ENCODE measurements at regions of chr11 and their contacts with region 1.

Region 1: DNA sequence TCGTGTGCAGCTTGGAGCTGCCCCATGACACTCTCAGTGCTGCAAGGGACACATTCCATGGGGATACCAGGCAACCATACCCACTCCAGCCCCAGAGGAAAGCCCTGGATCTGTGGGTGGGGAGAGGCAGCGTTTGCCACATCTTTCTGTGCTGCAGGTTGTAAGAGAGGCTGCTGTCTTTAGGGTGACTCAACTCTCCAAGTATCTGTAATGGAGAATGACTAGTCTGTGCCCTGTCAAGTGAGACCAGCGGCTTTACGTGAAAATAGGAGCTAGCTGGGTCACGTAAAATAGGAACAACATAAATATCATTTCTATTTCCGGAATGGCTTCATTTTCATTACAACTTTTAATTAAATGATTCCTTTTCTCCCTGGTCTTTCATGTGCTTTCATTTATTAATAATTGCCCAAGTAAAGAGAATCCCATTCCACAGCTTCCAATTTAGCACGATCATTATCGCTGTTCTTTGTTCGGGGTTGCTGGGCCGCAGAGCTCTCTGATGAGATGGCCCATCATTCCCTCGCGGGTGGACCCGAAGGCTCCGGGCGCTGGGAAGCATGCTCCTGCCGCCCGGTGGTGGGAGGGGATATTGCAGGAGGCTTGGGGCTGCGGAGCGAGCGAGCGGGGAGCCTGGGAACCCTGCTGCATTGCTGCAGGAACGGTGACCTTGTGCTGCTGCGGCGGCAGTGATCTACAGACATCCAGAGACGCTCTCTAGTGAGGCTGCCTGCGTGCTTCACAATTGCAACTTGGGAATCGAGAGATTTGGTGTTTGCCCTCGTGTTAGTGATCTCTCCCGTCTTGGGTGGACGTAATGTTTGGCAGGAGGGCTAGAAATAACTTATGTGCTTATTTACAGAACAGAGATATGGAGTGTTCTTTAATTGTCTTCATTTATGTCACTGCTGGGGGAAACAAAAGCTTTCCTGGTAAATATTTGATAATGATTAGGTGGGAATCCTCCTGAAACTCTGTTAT is 10.6 kb downstream of the SLC6A5 start:
- DNase-seq: peak; percentile 82 to 87 (median 84)
- ATAC-seq: peak; percentile 98
- H3K4me3 ChIP-seq: no peak overlapping the region
- H3K27ac ChIP-seq: no peak overlapping the region
- H3K4me1 ChIP-seq: peaks cover 0 to 8% of the 10 kb centered on the region in 2 experiments; a peak in 2 of 5 replicates
- H3K27me3 ChIP-seq: peaks cover 9 to 21% of the 10 kb centered on the region in 2 experiments; a peak in 4 of 5 replicates
- CTCF ChIP-seq: peak; percentile 93 to 97 (median 94)
- EP300 ChIP-seq: no peak
- POLR2A ChIP-seq: no peak
- RAD21 ChIP-seq: peak; percentile 92 to 93

Region 2: GRCh38 chr11:19951558-19952115 is 658.4 kb before region 1 on chr11:
- CTCF ChIA-PET with region 1: no interaction called
- POLR2A ChIA-PET with region 1: no interaction called
- in situ Hi-C with region 1: loop called (anchors 25 kb)
- intact Hi-C with region 1: loop called (anchors 10 kb)
- DNase-seq: peak; percentile 49 to 68 (median 58)
- ATAC-seq: peak; percentile 68
- H3K4me3 ChIP-seq: no peak overlapping the region
- H3K27ac ChIP-seq: no peak overlapping the region
- H3K4me1 ChIP-seq: no peaks in the 10 kb centered on the region; a peak in 2 of 5 replicates
- H3K27me3 ChIP-seq: peaks cover 21 to 22% of the 10 kb centered on the region in 2 experiments
- CTCF ChIP-seq: peak; percentile 52 to 79 (median 56)
- EP300 ChIP-seq: no peak
- POLR2A ChIP-seq: no peak
- RAD21 ChIP-seq: peak; percentile 92 to 97

Region 3: GRCh38 chr11:20355221-20356219 is 254.5 kb before region 1 on chr11:
- CTCF ChIA-PET with region 1: no interaction called
- POLR2A ChIA-PET with region 1: no interaction called
- in situ Hi-C with region 1: no loop called
- intact Hi-C with region 1: loop called (anchors 5 kb)
- DNase-seq: peak; percentile 45 to 72 (median 58)
- ATAC-seq: peak; percentile 89
- H3K4me3 ChIP-seq: no peak overlapping the region
- H3K27ac ChIP-seq: no peak overlapping the region
- H3K4me1 ChIP-seq: peaks cover 0 to 28% of the 10 kb centered on the region in 2 experiments; a peak in 4 of 5 replicates
- H3K27me3 ChIP-seq: no peaks in the 10 kb centered on the region
- CTCF ChIP-seq: peak; percentile 59 to 70 (median 64)
- EP300 ChIP-seq: no peak
- POLR2A ChIP-seq: no peak
- RAD21 ChIP-seq: peak; percentile 10 to 40; a peak in 2 of 4 replicates

Region 4: DNA sequence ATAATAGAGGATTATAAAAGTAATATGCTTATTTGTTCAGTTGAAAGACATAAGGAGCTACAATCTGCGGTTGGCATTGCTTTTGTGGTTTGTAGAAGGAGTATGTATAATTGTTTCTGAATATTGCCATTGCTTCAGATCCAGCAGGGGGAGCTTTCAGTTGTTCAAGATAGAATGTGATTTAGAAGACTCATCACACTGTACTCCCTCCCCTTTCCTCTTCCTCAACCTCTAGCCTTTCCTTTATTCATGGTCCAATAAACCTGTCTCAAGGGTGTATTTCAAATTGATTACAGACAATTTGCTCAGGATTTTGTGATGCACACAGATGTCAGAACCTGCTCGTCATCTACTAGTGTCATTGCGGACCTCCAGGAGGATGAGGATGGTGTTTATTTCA is 212.7 kb before region 1 on chr11:
- CTCF ChIA-PET with region 1: interaction called, 5 read pairs
- POLR2A ChIA-PET with region 1: interaction called, 3 read pairs
- in situ Hi-C with region 1: no loop called
- intact Hi-C with region 1: loop called (anchors 1 kb)
- DNase-seq: peak; percentile 16 to 42 (median 21)
- ATAC-seq: peak; percentile 90
- H3K4me3 ChIP-seq: no peak overlapping the region
- H3K27ac ChIP-seq: no peak overlapping the region
- H3K4me1 ChIP-seq: no peaks in the 10 kb centered on the region
- H3K27me3 ChIP-seq: no peaks in the 10 kb centered on the region
- CTCF ChIP-seq: peak; percentile 25 to 63 (median 55); a peak in 4 of 6 replicates
- EP300 ChIP-seq: no peak
- POLR2A ChIP-seq: no peak
- RAD21 ChIP-seq: peak; percentile 42 to 52

Region 5: GRCh38 chr11:20584093-20584774 is 25.8 kb before region 1 on chr11:
- CTCF ChIA-PET with region 1: no interaction called
- POLR2A ChIA-PET with region 1: no interaction called
- in situ Hi-C with region 1: no loop called
- intact Hi-C with region 1: no loop called
- DNase-seq: no peak
- ATAC-seq: peak; percentile 75
- H3K4me3 ChIP-seq: no peak overlapping the region
- H3K27ac ChIP-seq: no peak overlapping the region
- H3K4me1 ChIP-seq: no peaks in the 10 kb centered on the region; a peak in 1 of 5 replicates
- H3K27me3 ChIP-seq: peaks cover 0 to 6% of the 10 kb centered on the region in 2 experiments; a peak in 3 of 5 replicates
- CTCF ChIP-seq: no peak
- EP300 ChIP-seq: no peak
- POLR2A ChIP-seq: no peak
- RAD21 ChIP-seq: no peak

Measured in K562 (cell line).